ENCODE measurements at regions of chr3 and their contacts with region 1.

Region 1: GRCh38 chr3:115783938-115784738 is 160.8 kb downstream of the GAP43 start:
- DNase-seq: peak; percentile 78 to 95 (median 91)
- ATAC-seq: peak; percentile 86 to 91 (median 88)
- H3K4me3 ChIP-seq: peak overlapping the region; percentile 64 to 79
- H3K4me3 Mint-ChIP-seq: peak overlapping the region; percentile 87 to 94 (median 93)
- H3K27ac ChIP-seq: peak overlapping the region; percentile 97
- H3K27ac Mint-ChIP-seq: peak overlapping the region; percentile 96 to 98
- H3K4me1 ChIP-seq: peaks cover 2 to 15% of the 10 kb centered on the region in 2 experiments
- H3K4me1 Mint-ChIP-seq: peaks cover 11 to 16% (median 16%) of the 10 kb centered on the region in 3 donors
- H3K27me3 ChIP-seq: no peaks in the 10 kb centered on the region
- H3K27me3 Mint-ChIP-seq: peaks cover 0 to 2% of the 10 kb centered on the region in 2 donors

Region 2: GRCh38 chr3:115814778-115815380 is 30.7 kb after region 1 on chr3:
- CTCF ChIA-PET with region 1: interaction called, 4 to 14 read pairs
- POLR2A ChIA-PET with region 1: no interaction called
- DNase-seq: peak in 34 of 35 experiments; percentile 4 to 79 (median 52)
- ATAC-seq: peak; percentile 52 to 68 (median 60)
- H3K4me3 ChIP-seq: no peak overlapping the region
- H3K4me3 Mint-ChIP-seq: no peak overlapping the region
- H3K27ac ChIP-seq: no peak overlapping the region
- H3K27ac Mint-ChIP-seq: no peak overlapping the region
- H3K4me1 ChIP-seq: no peaks in the 10 kb centered on the region
- H3K4me1 Mint-ChIP-seq: no peaks in the 10 kb centered on the region
- H3K27me3 ChIP-seq: peaks cover 0 to 3% of the 10 kb centered on the region in 2 experiments
- H3K27me3 Mint-ChIP-seq: peaks cover 4 to 5% of the 10 kb centered on the region in 2 donors